Sciatic nerve (tissue), 2 donors: ENCODE measurements at regions of chr1 and their contacts with region 1.

Region 1: DNA sequence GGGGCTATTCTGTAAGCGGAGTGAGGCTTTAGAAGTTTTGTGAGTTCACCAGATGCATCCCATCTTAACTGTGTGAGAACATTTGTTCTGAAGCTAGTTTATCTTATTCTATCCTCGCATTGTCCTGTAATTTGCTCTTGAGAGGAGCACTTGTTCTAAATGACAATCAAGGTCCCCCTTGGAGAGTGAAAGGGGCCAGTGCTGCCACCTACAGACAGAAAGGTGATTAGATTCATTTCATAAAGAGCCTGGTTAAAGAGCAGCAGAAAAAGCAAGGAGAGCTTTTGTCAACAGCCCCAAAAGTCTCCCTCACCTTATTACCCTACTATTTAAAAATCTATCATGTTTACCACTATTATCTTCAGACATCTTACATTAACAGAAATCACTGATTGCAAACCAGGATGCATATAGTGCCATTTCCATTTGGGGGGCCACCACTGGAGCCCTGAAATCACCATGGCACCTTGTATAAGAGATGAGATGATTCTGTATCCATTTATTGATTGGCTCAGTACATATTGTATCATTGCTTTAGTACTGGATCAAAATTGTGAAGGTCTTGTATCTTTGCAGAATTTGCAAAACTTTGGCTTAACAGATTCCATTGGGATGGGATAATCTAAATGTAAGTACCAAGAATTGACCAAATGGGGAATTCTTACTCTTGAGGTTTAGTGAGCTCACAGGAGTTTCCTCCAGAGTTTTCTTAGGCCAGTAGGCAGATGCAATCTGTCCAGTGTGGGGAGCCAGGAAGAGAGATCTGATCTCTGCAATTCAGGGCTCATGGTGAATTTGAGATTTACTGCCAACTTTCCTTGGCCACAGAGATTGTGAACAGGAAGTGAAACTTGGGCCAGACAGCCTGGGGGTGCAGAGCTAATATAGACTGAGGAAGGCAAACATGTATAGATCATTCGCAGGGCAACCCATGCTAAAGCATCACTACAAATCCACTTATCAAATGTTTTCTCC is 64.3 kb upstream of the TRABD2B start:
- DNase-seq: peak; percentile 80
- ATAC-seq: peak; percentile 82

Region 2: GRCh38 chr1:47992720-47993415 is 68.6 kb before region 1 on chr1:
- intact Hi-C with region 1: loop called (anchors 5 kb)
- DNase-seq: peak; percentile 63
- ATAC-seq: peak; percentile 77